Calu3 (cell line): ENCODE measurements at regions of chr6 and their contacts with region 1.

Region 1: GRCh38 chr6:153231048-153231646 is 100.1 kb upstream of the RGS17 start:
- DNase-seq: peak; percentile 62
- H3K4me3 Mint-ChIP-seq: no peak overlapping the region
- H3K27ac Mint-ChIP-seq: no peak overlapping the region
- H3K4me1 Mint-ChIP-seq: no peaks in the 10 kb centered on the region
- H3K27me3 Mint-ChIP-seq: no peaks in the 10 kb centered on the region
- CTCF ChIP-seq: peak; percentile 69

Region 2: GRCh38 chr6:153032255-153032882 is 198.8 kb before region 1 on chr6:
- CTCF ChIA-PET with region 1: no interaction called
- intact Hi-C with region 1: loop called (anchors 5 kb)
- DNase-seq: no peak
- H3K4me3 Mint-ChIP-seq: no peak overlapping the region
- H3K27ac Mint-ChIP-seq: peak overlapping the region; percentile 4
- H3K4me1 Mint-ChIP-seq: peaks cover 20% of the 10 kb centered on the region
- H3K27me3 Mint-ChIP-seq: no peaks in the 10 kb centered on the region
- CTCF ChIP-seq: no peak

Region 3: DNA sequence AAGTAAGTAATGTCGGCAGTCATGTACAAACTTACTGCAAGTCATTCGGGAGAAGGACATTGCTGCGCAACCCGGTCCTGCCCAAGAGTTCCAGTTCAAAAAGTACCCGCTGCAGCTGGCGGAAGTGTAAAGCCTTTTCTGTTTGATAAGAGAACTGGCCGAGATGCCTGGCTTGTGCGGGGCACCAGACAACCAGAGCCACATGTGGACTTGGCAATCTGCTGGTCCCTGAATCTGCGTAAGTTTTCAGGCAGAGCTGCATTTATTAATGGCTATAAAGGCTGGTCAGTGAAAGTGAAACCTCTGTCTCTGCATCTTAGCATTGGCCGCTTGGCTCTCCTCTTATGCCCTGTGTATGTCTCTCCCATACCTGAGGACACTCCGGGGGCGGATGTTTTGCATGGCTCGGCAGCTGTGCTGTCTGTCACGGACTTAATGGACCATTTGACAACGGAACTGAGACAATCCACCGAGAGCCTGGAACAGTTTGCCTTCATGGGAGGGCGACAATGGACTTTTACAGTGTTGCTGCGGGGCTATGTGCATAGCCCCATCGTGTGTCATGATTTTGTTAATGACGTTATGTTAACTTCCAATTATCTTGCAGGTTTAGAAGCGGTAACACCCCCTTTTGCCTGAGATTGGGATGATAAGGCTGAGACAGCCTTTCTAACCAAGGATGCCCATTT is 80.3 kb before region 1 on chr6:
- CTCF ChIA-PET with region 1: no interaction called
- intact Hi-C with region 1: no loop called
- DNase-seq: no peak
- H3K4me3 Mint-ChIP-seq: peak overlapping the region; percentile 57
- H3K27ac Mint-ChIP-seq: no peak overlapping the region
- H3K4me1 Mint-ChIP-seq: no peaks in the 10 kb centered on the region
- H3K27me3 Mint-ChIP-seq: no peaks in the 10 kb centered on the region
- CTCF ChIP-seq: no peak

Region 4: GRCh38 chr6:153167061-153167891 is 63.9 kb before region 1 on chr6:
- CTCF ChIA-PET with region 1: no interaction called
- intact Hi-C with region 1: no loop called
- DNase-seq: no peak
- H3K4me3 Mint-ChIP-seq: peak overlapping the region; percentile 45
- H3K27ac Mint-ChIP-seq: peak overlapping the region; percentile 73
- H3K4me1 Mint-ChIP-seq: peaks cover 20% of the 10 kb centered on the region
- H3K27me3 Mint-ChIP-seq: no peaks in the 10 kb centered on the region
- CTCF ChIP-seq: no peak

Region 5: GRCh38 chr6:153312641-153313040 is 81.5 kb after region 1 on chr6:
- CTCF ChIA-PET with region 1: no interaction called
- intact Hi-C with region 1: loop called (anchors 1 kb)
- DNase-seq: peak; percentile 61
- H3K4me3 Mint-ChIP-seq: no peak overlapping the region
- H3K27ac Mint-ChIP-seq: no peak overlapping the region
- H3K4me1 Mint-ChIP-seq: no peaks in the 10 kb centered on the region
- H3K27me3 Mint-ChIP-seq: peaks cover 22% of the 10 kb centered on the region
- CTCF ChIP-seq: no peak

Region 6: DNA sequence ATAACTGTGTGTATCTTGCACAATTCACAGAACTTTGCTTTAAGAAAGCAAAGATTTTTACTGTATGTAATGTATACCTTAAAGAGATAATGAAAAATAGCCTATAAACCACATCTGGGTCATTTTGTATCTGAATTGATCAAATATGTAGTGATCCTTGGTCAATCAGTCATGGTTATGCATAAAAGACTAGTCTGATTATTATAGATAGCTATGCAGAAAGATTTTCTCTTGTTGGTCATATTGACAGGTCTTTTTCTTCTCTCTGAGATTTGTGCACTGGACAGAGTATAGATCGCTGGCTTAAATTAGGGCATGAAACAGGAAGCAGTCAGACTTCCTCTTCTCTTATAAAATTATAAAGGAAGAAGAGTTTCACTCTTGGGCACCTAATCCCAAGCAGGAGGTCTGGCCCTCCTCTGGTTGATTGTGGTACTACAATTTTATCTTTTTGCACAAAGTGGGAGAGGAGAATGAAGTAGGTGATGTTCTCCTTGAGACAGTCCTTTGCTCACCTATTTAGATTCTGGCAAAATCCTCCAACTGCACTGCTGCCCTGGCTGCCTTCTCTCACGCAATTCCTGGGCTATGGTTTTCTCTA is 280.8 kb after region 1 on chr6:
- CTCF ChIA-PET with region 1: no interaction called
- intact Hi-C with region 1: loop called (anchors 2 kb)
- DNase-seq: peak; percentile 30
- H3K4me3 Mint-ChIP-seq: no peak overlapping the region
- H3K27ac Mint-ChIP-seq: no peak overlapping the region
- H3K4me1 Mint-ChIP-seq: no peaks in the 10 kb centered on the region
- H3K27me3 Mint-ChIP-seq: no peaks in the 10 kb centered on the region
- CTCF ChIP-seq: peak; percentile 42

Region 7: GRCh38 chr6:153947808-153948447 is 716.8 kb after region 1 on chr6:
- CTCF ChIA-PET with region 1: no interaction called
- intact Hi-C with region 1: loop called (anchors 2 kb)
- DNase-seq: peak; percentile 35
- H3K4me3 Mint-ChIP-seq: no peak overlapping the region
- H3K27ac Mint-ChIP-seq: no peak overlapping the region
- H3K4me1 Mint-ChIP-seq: no peaks in the 10 kb centered on the region
- H3K27me3 Mint-ChIP-seq: no peaks in the 10 kb centered on the region
- CTCF ChIP-seq: peak; percentile 79

Region 8: GRCh38 chr6:154041001-154041400 is 809.9 kb after region 1 on chr6:
- CTCF ChIA-PET with region 1: interaction called, 5 read pairs
- intact Hi-C with region 1: loop called (anchors 2 kb)
- DNase-seq: no peak
- H3K4me3 Mint-ChIP-seq: no peak overlapping the region
- H3K27ac Mint-ChIP-seq: no peak overlapping the region
- H3K4me1 Mint-ChIP-seq: no peaks in the 10 kb centered on the region
- H3K27me3 Mint-ChIP-seq: no peaks in the 10 kb centered on the region
- CTCF ChIP-seq: no peak